Colonic mucosa (tissue), 4 donors: ENCODE measurements at regions of chr20 and their contacts with region 1.

Region 1: DNA sequence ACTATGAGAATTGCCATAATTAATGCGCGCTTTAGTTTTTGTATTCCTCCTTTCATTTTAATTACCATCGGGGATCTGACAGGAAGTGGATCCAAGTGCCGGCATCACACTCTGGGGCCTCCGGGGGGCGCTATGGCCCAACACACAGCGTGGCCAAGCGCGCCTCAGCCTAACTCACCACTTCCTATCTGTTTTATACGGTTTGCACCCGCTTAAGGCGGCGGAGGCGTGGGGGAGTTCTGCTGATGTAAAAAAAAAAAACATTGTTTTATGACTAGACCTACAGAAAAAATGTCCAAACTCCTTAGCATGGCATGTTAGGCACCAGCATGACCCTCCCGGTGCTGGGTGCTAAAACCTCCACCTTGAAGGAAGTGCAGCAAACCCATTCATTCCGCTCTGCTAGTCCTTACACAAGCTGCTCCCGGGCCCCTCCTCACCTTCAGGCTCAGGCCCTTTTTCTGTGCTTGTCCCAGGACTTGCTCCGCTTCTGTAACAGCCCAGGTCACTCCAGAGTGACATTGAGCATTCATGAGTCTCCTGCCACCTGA is 4.5 kb upstream of the EBF4 start:
- DNase-seq: peak; percentile 46
- H3K4me3 ChIP-seq: no peak overlapping the region
- H3K27ac ChIP-seq: no peak overlapping the region
- H3K4me1 ChIP-seq: no peaks in the 10 kb centered on the region
- H3K27me3 ChIP-seq: peaks cover 10% of the 10 kb centered on the region
- CTCF ChIP-seq: peak; percentile 45

Region 2: GRCh38 chr20:2742934-2743559 is 54.9 kb after region 1 on chr20:
- intact Hi-C with region 1: loop called (anchors 5 kb)
- DNase-seq: peak; percentile 57
- H3K4me3 ChIP-seq: no peak overlapping the region
- H3K27ac ChIP-seq: no peak overlapping the region
- H3K4me1 ChIP-seq: no peaks in the 10 kb centered on the region
- H3K27me3 ChIP-seq: no peaks in the 10 kb centered on the region
- CTCF ChIP-seq: peak; percentile 68

Region 3: DNA sequence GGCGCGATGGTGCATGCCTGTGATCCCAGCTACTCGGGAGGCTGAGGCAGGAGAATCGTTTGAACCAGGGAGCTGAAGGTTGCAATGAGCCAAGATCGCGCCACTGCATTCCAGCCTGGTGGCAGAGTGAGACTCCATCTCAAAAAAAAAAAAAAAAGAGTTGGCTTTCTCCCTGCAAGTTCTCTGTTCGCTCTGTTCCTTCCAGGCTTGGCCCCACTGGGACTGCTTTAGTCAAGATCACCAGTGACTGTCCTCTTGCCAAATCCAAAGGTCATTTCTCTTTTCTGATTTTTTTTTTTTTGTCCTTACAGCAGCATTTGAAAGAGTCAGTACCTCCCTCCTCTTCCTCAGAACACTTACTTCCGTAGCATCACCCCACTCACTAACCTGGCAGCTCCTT is 344.5 kb after region 1 on chr20:
- intact Hi-C with region 1: no loop called
- DNase-seq: no peak
- H3K4me3 ChIP-seq: no peak overlapping the region
- H3K27ac ChIP-seq: no peak overlapping the region
- H3K4me1 ChIP-seq: no peaks in the 10 kb centered on the region
- H3K27me3 ChIP-seq: no peaks in the 10 kb centered on the region
- CTCF ChIP-seq: no peak